HepG2 (cell line): ENCODE measurements at regions of chr9 and their contacts with region 1.

Region 1: GRCh38 chr9:137046098-137046787 is at the start of gene NPDC1:
- DNase-seq: peak; percentile 71
- ATAC-seq: peak; percentile 76
- H3K4me3 ChIP-seq: peak within 1 kb of the TSS; percentile 57 to 77 (median 58); a peak in 5 of 6 replicates
- H3K27ac ChIP-seq: no peak within 1 kb of the TSS
- H3K4me1 ChIP-seq: peaks cover 25% of the 10 kb centered on the region
- H3K27me3 ChIP-seq: peaks cover 3 to 27% of the 10 kb centered on the region in 2 experiments; a peak in 4 of 5 replicates
- CTCF ChIP-seq: peak; percentile 93
- EP300 ChIP-seq: no peak
- POLR2A ChIP-seq: no peak
- RAD21 ChIP-seq: peak; percentile 89
- total RNA-seq, gene NPDC1: 0.63 and 0.84 TPM in 2 replicates

Region 2: GRCh38 chr9:136769710-136770191 is 276.5 kb before region 1 on chr9:
- CTCF ChIA-PET with region 1: no interaction called
- POLR2A ChIA-PET with region 1: no interaction called
- in situ Hi-C with region 1: loop called (anchors 10 kb)
- intact Hi-C with region 1: no loop called
- DNase-seq: no peak
- ATAC-seq: peak; percentile 67
- H3K4me3 ChIP-seq: no peak overlapping the region
- H3K27ac ChIP-seq: no peak overlapping the region
- H3K4me1 ChIP-seq: peaks cover 35% of the 10 kb centered on the region
- H3K27me3 ChIP-seq: 0 out of 5 replicates have a peak, but pooled peaks cover 0 to 4% of the 10 kb centered on the region in 2 experiments
- CTCF ChIP-seq: peak; percentile 73
- EP300 ChIP-seq: no peak
- POLR2A ChIP-seq: no peak
- RAD21 ChIP-seq: no peak

Region 3: GRCh38 chr9:137064027-137064879 is 18.0 kb after region 1 on chr9:
- CTCF ChIA-PET with region 1: interaction called, 25 read pairs
- POLR2A ChIA-PET with region 1: interaction called, 9 read pairs
- in situ Hi-C with region 1: no loop called
- intact Hi-C with region 1: loop called (anchors 1 kb)
- DNase-seq: peak; percentile 41
- ATAC-seq: peak; percentile 33
- H3K4me3 ChIP-seq: no peak overlapping the region
- H3K27ac ChIP-seq: no peak overlapping the region
- H3K4me1 ChIP-seq: peaks cover 25% of the 10 kb centered on the region
- H3K27me3 ChIP-seq: no peaks in the 10 kb centered on the region; a peak in 1 of 5 replicates
- CTCF ChIP-seq: peak; percentile 98
- EP300 ChIP-seq: no peak
- POLR2A ChIP-seq: no peak
- RAD21 ChIP-seq: peak; percentile 88